ENCODE measurements at regions of chr15 and their contacts with region 1.

Region 1: GRCh38 chr15:43903864-43904290 is 77.1 kb downstream of the WDR76 start:
- ATAC-seq: peak; percentile 89 to 100 (median 94)
- H3K4me3 ChIP-seq: no peak overlapping the region
- H3K27ac ChIP-seq: no peak overlapping the region
- H3K4me1 ChIP-seq: peaks cover 5 to 10% of the 10 kb centered on the region in 2 donors

Region 2: GRCh38 chr15:44066316-44066740 is 162.5 kb after region 1 on chr15:
- in situ Hi-C with region 1: loop called in 2 of 9 experiments (anchors 25 kb)
- ATAC-seq: peak in 3 of 8 experiments; percentile 37 to 61 (median 60)
- H3K4me3 ChIP-seq: no peak overlapping the region
- H3K27ac ChIP-seq: no peak overlapping the region
- H3K4me1 ChIP-seq: no peaks in the 10 kb centered on the region

Region 3: DNA sequence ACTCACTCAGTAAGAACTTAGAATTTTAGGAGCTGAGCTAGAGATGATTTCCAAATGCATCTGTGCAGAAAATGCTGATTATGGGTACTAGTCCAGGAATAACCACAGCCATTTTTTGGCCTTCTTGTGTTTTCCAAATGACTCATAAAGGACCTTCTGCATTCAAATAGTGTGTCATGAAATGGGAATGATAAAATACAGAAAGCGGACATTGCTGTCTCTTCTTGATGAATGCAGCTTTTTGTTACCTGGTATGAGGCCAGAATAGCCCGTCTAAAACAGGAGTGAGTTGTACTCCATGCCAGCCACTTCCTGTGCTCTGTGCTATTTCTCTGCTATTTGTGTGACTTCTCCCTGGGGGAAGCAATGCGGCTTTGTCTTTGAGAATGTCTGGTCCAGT is 311.7 kb after region 1 on chr15:
- in situ Hi-C with region 1: loop called in 8 of 9 experiments (anchors 25 kb)
- ATAC-seq: peak in 2 of 8 experiments; percentile 77 to 83
- H3K4me3 ChIP-seq: no peak overlapping the region
- H3K27ac ChIP-seq: no peak overlapping the region
- H3K4me1 ChIP-seq: peaks cover 0 to 8% of the 10 kb centered on the region in 2 donors

Measured in motor neuron (in vitro differentiated cells).